HepG2 (cell line): ENCODE measurements at regions of chr2 and their contacts with region 1.

Region 1: GRCh38 chr2:39593439-39594393 is 72.0 kb upstream of the TMEM178A start:
- DNase-seq: peak; percentile 56
- ATAC-seq: peak; percentile 90
- H3K4me3 ChIP-seq: no peak overlapping the region
- H3K27ac ChIP-seq: no peak overlapping the region
- H3K4me1 ChIP-seq: no peaks in the 10 kb centered on the region
- H3K27me3 ChIP-seq: no peaks in the 10 kb centered on the region
- CTCF ChIP-seq: peak; percentile 73
- EP300 ChIP-seq: no peak
- POLR2A ChIP-seq: no peak
- RAD21 ChIP-seq: no peak

Region 2: DNA sequence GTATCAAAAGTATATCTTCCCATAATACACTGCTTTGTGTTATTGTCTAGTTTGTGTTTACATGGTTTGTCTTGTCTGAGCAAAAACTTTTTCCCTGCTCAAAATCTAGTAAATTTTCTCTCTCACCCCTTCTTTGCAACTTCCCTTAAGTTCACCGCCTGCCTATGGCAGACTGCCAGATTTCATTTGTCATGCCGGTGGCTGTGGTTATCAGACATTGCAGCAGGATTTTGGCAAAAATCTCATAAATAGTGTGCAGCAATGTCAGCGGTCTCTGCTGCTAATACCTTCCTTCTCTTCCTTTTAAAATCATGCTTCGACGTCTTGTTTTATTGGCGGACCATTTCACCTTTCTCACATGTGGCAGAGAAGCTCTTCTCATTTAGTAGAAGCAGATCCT is 26.4 kb after region 1 on chr2:
- CTCF ChIA-PET with region 1: no interaction called
- POLR2A ChIA-PET with region 1: no interaction called
- in situ Hi-C with region 1: no loop called
- intact Hi-C with region 1: no loop called
- DNase-seq: peak; percentile 17
- ATAC-seq: no peak
- H3K4me3 ChIP-seq: no peak overlapping the region
- H3K27ac ChIP-seq: no peak overlapping the region
- H3K4me1 ChIP-seq: peaks cover 24% of the 10 kb centered on the region
- H3K27me3 ChIP-seq: peaks cover 0 to 14% of the 10 kb centered on the region in 2 experiments; a peak in 2 of 5 replicates
- CTCF ChIP-seq: no peak
- EP300 ChIP-seq: no peak
- POLR2A ChIP-seq: no peak
- RAD21 ChIP-seq: no peak

Region 3: GRCh38 chr2:39642051-39642742 is 48.5 kb after region 1 on chr2:
- CTCF ChIA-PET with region 1: no interaction called
- POLR2A ChIA-PET with region 1: no interaction called
- in situ Hi-C with region 1: no loop called
- intact Hi-C with region 1: no loop called
- DNase-seq: peak; percentile 80
- ATAC-seq: peak; percentile 88
- H3K4me3 ChIP-seq: no peak overlapping the region
- H3K27ac ChIP-seq: no peak overlapping the region
- H3K4me1 ChIP-seq: peaks cover 13% of the 10 kb centered on the region
- H3K27me3 ChIP-seq: no peaks in the 10 kb centered on the region
- CTCF ChIP-seq: no peak
- EP300 ChIP-seq: no peak
- POLR2A ChIP-seq: no peak
- RAD21 ChIP-seq: no peak

Region 4: GRCh38 chr2:39728941-39729351 is 135.2 kb after region 1 on chr2:
- CTCF ChIA-PET with region 1: interaction called, 10 read pairs
- POLR2A ChIA-PET with region 1: no interaction called
- in situ Hi-C with region 1: no loop called
- intact Hi-C with region 1: loop called (anchors 1 kb)
- DNase-seq: peak; percentile 58
- ATAC-seq: peak; percentile 80
- H3K4me3 ChIP-seq: no peak overlapping the region
- H3K27ac ChIP-seq: no peak overlapping the region
- H3K4me1 ChIP-seq: peaks cover 27% of the 10 kb centered on the region; the same call in 1 of the 2 replicates
- H3K27me3 ChIP-seq: peaks cover 0 to 11% of the 10 kb centered on the region in 2 experiments; a peak in 3 of 5 replicates
- CTCF ChIP-seq: peak; percentile 72
- EP300 ChIP-seq: no peak
- POLR2A ChIP-seq: no peak
- RAD21 ChIP-seq: peak; percentile 67